Activated B cell treated with CpG ODN at 0.5 μM for 24 hours (primary cell): ENCODE measurements at regions of chr1 and their contacts with region 1.

Region 1: GRCh38 chr1:1059494-1060280 is 14.4 kb downstream of the RNF223 start:
- DNase-seq: peak; percentile 97
- ATAC-seq: peak; percentile 59
- H3K4me3 Mint-ChIP-seq: peak overlapping the region; percentile 74
- H3K27ac Mint-ChIP-seq: peak overlapping the region; percentile 12
- H3K4me1 Mint-ChIP-seq: peaks cover 43% of the 10 kb centered on the region
- H3K27me3 Mint-ChIP-seq: peaks cover 18% of the 10 kb centered on the region
- CTCF ChIP-seq: no peak

Region 2: GRCh38 chr1:886760-887159 is 172.9 kb before region 1 on chr1:
- CTCF ChIA-PET with region 1: no interaction called
- POLR2A ChIA-PET with region 1: no interaction called
- intact Hi-C with region 1: no loop called
- DNase-seq: no peak
- ATAC-seq: no peak
- H3K4me3 Mint-ChIP-seq: no peak overlapping the region
- H3K27ac Mint-ChIP-seq: no peak overlapping the region
- H3K4me1 Mint-ChIP-seq: no peaks in the 10 kb centered on the region
- H3K27me3 Mint-ChIP-seq: peaks cover 57% of the 10 kb centered on the region
- CTCF ChIP-seq: no peak

Region 3: DNA sequence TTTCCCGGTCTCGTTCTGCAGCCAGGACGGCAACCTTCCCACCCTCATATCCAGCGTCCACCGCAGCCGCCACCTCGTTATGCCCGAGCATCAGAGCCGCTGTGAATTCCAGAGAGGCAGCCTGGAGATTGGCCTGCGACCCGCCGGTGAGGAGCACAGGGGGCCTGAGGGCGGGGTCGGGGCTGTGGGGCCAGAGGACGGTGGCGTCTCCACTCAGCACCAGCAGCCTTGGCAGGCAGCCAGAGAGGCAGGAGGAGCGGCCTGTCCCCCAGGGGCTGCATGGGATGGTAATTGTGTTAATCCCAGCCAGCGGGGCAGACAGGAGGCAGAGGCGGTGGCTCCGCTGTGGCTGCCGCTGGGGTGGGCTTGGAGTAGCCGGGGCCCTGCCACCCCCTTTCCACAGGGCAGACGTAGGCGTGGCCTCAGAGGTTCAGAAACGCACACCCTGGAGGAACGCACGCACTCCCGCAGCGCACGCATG is 123.9 kb before region 1 on chr1:
- CTCF ChIA-PET with region 1: no interaction called
- POLR2A ChIA-PET with region 1: no interaction called
- intact Hi-C with region 1: no loop called
- DNase-seq: no peak
- ATAC-seq: no peak
- H3K4me3 Mint-ChIP-seq: no peak overlapping the region
- H3K27ac Mint-ChIP-seq: no peak overlapping the region
- H3K4me1 Mint-ChIP-seq: peaks cover 3% of the 10 kb centered on the region
- H3K27me3 Mint-ChIP-seq: peaks cover 39% of the 10 kb centered on the region
- CTCF ChIP-seq: no peak

Region 4: DNA sequence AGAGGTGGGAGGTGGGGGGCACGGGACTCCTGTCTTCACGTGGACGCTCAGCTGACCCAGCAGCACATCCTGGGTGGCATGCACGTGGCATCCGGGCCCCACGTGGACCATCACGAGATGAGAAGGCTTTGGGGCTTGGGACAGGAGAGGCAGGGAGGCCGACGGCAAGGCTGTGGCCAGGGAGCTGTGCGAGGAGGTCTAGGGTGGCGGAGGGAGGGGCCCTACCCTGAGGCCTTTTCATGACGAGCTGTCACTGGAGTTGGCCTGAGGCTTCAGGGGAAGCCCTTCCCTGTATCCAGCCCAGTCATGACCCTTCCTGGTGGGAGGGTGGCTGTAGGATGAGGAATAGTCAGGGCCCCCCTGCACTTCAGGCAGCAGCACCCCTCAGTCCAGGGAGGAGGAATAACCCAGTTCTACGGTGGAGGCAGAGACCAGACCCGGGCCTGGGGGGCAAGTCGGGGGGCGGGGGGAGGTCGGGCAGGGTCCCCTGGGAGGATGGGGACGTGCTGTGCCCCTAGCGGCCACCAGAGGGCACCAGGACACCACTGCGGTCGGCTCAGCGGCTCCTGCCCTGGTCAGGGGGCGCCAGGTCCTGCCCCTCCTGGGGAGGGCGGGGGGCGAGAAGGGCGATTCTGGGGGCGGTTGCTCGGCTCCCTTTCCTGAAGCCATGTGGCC is 75.8 kb before region 1 on chr1:
- CTCF ChIA-PET with region 1: interaction called, 8 read pairs
- POLR2A ChIA-PET with region 1: interaction called, 7 read pairs
- intact Hi-C with region 1: loop called (anchors 1 kb)
- DNase-seq: peak; percentile 66
- ATAC-seq: peak; percentile 95
- H3K4me3 Mint-ChIP-seq: no peak overlapping the region
- H3K27ac Mint-ChIP-seq: no peak overlapping the region
- H3K4me1 Mint-ChIP-seq: no peaks in the 10 kb centered on the region
- H3K27me3 Mint-ChIP-seq: peaks cover 23% of the 10 kb centered on the region
- CTCF ChIP-seq: peak; percentile 39

Region 5: GRCh38 chr1:1019122-1019999 is 40.3 kb before region 1 on chr1:
- CTCF ChIA-PET with region 1: interaction called, 8 read pairs
- POLR2A ChIA-PET with region 1: interaction called, 14 read pairs
- intact Hi-C with region 1: loop called (anchors 1 kb)
- DNase-seq: peak; percentile 84
- ATAC-seq: peak; percentile 87
- H3K4me3 Mint-ChIP-seq: peak overlapping the region; percentile 72
- H3K27ac Mint-ChIP-seq: no peak overlapping the region
- H3K4me1 Mint-ChIP-seq: peaks cover 14% of the 10 kb centered on the region
- H3K27me3 Mint-ChIP-seq: peaks cover 4% of the 10 kb centered on the region
- CTCF ChIP-seq: no peak

Region 6: GRCh38 chr1:1040004-1040991 is 19.4 kb before region 1 on chr1:
- CTCF ChIA-PET with region 1: interaction called, 15 read pairs
- POLR2A ChIA-PET with region 1: interaction called, 99 read pairs
- intact Hi-C with region 1: loop called (anchors 1 kb)
- DNase-seq: peak; percentile 58
- ATAC-seq: peak; percentile 77
- H3K4me3 Mint-ChIP-seq: peak overlapping the region; percentile 71
- H3K27ac Mint-ChIP-seq: peak overlapping the region; percentile 18
- H3K4me1 Mint-ChIP-seq: peaks cover 28% of the 10 kb centered on the region
- H3K27me3 Mint-ChIP-seq: peaks cover 9% of the 10 kb centered on the region
- CTCF ChIP-seq: no peak

Region 7: GRCh38 chr1:1115786-1116700 is 56.4 kb after region 1 on chr1 and contains the start of gene C1orf159:
- CTCF ChIA-PET with region 1: interaction called, 6 read pairs
- POLR2A ChIA-PET with region 1: interaction called, 9 read pairs
- intact Hi-C with region 1: loop called (anchors 1 kb)
- DNase-seq: peak; percentile 99
- ATAC-seq: peak; percentile 92
- H3K4me3 Mint-ChIP-seq: peak within 1 kb of the TSS; percentile 88
- H3K27ac Mint-ChIP-seq: peak within 1 kb of the TSS; percentile 80
- H3K4me1 Mint-ChIP-seq: peaks cover 9% of the 10 kb centered on the region
- H3K27me3 Mint-ChIP-seq: peaks cover 5% of the 10 kb centered on the region
- CTCF ChIP-seq: no peak
- total RNA-seq, gene C1orf159: 20.8 and 26.5 TPM in 2 replicates

Region 8: GRCh38 chr1:1250786-1251284 is 191.1 kb after region 1 on chr1:
- CTCF ChIA-PET with region 1: no interaction called
- POLR2A ChIA-PET with region 1: interaction called, 19 read pairs
- intact Hi-C with region 1: no loop called
- DNase-seq: no peak
- ATAC-seq: peak; percentile 76
- H3K4me3 Mint-ChIP-seq: peak overlapping the region; percentile 64
- H3K27ac Mint-ChIP-seq: peak overlapping the region; percentile 72
- H3K4me1 Mint-ChIP-seq: peaks cover 19% of the 10 kb centered on the region
- H3K27me3 Mint-ChIP-seq: no peaks in the 10 kb centered on the region
- CTCF ChIP-seq: no peak